Head of caudate nucleus (tissue), 42 donors: ENCODE measurements at regions of chr7 and their contacts with region 1.

Region 1: GRCh38 chr7:74206589-74207120 is 3.2 kb upstream of the LAT2 start:
- DNase-seq: peak; percentile 40 to 97 (median 90)

Region 2: DNA sequence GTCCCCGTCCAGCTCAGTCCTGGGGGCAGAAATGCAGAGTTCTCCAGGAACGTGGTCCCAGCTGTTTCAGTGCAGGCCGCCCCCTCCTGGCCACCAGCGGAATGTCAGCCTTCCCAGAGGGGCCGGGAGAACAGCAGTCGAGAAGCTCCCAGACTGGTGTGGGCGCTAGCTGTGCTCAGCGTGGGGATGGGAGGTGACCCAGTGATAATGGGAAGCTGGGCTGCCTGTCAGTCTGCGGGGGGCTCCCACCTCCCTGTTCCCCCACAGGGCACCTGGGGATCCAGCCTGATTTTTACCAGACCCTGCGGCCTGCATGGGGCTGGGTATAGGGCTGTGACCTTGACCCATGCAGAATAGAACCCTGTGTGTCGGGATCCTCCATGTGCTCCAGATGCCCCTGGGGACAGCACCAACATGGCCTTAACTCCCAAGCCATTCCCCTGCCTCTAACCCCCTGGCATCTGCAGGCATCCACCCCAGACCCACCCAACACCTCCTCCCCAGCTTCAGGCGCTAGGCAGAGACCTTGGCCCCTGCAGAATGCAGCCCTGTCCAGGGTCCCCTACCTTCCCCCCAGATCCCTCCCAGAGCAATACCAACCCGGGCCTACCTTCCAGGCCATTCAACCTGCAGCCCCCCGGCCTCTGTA is 179.6 kb before region 1 on chr7:
- intact Hi-C with region 1: no loop called
- DNase-seq: peak; percentile 64 to 95 (median 89)

Region 3: GRCh38 chr7:74074770-74075169 is 131.9 kb before region 1 on chr7:
- intact Hi-C with region 1: no loop called
- DNase-seq: no peak

Region 4: GRCh38 chr7:74254129-74254857 is 47.6 kb after region 1 on chr7 and contains the start of gene RFC2:
- intact Hi-C with region 1: loop called (anchors 5 kb)
- DNase-seq: peak; percentile 89 to 99 (median 97)

Region 5: DNA sequence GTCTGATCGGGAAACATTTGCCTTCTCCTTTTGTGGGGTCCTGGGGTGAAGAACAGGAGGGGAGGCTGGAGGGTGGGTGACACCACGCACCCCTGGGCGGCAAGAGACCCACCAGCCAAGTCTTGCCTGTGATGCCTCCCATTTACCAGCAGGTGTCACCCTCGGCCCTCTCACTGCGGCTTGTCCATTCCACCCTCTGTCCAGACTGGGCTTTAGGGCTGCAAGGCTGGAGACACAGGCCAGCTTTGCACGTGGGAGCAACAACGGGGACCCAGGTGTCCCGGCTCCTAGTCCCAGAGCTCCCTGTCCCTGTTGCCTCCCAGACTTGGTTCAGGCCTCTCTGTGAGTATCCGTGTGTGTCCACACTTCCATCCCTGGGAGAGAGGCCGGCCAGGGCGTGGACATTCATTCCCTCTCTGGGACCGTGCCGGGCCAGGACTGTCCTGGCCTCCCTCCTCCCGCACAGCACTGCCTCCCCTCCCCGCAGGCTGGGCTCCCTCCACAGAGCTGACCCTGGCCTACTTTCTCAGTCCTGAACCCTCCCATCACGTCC is 210.8 kb after region 1 on chr7:
- intact Hi-C with region 1: no loop called
- DNase-seq: peak; percentile 31 to 88 (median 74)